Gastrocnemius medialis (tissue), 4 donors: ENCODE measurements at regions of chr6 and their contacts with region 1.

Region 1: GRCh38 chr6:109009236-109009961 is 85.2 kb downstream of the SESN1 start:
- DNase-seq: peak; percentile 87 to 92
- ATAC-seq: peak; percentile 85 to 86
- H3K4me3 ChIP-seq: peak overlapping the region; percentile 60 to 89 (median 78)
- H3K27ac ChIP-seq: peak overlapping the region; percentile 92 to 98 (median 95)
- H3K4me1 ChIP-seq: peaks cover 52 to 61% of the 10 kb centered on the region in 2 donors
- H3K27me3 ChIP-seq: no peaks in the 10 kb centered on the region
- CTCF ChIP-seq: peak; percentile 18 to 74 (median 53)
- POLR2A ChIP-seq: peak; percentile 82 to 97

Region 2: GRCh38 chr6:108541838-108542759 is 467.3 kb before region 1 on chr6:
- in situ Hi-C with region 1: no loop called
- intact Hi-C with region 1: loop called (anchors 5 kb)
- DNase-seq: peak; percentile 76 to 86
- ATAC-seq: peak; percentile 90 to 94
- H3K4me3 ChIP-seq: no peak overlapping the region
- H3K27ac ChIP-seq: peak overlapping the region; percentile 54 to 86 (median 75)
- H3K4me1 ChIP-seq: peaks cover 26 to 29% of the 10 kb centered on the region in 2 donors
- H3K27me3 ChIP-seq: no peaks in the 10 kb centered on the region
- CTCF ChIP-seq: peak; percentile 80 to 95 (median 89)
- POLR2A ChIP-seq: no peak

Region 3: DNA sequence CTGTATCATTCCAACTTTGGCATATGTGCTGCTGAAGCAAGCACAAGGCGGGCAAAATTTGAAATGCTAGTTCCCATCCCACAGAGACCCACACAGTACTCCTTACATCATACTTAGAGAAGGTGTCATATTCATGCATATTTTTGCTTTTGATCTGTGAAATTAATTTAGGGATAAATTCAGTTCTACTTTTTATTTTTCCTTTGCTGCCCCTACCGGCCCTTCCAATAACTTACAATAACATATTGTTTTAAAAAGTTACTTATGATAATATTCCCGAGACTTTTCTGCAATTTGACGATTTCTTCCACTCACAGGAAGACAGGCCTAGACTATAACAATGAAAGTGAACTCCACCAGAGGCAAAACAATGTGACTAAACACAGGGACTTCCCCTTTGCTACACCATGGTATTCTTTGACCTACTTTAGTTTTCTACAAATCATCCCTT is 50.2 kb after region 1 on chr6:
- in situ Hi-C with region 1: loop called in 1 of 4 experiments (anchors 10 kb)
- intact Hi-C with region 1: loop called (anchors 5 kb)
- DNase-seq: no peak
- ATAC-seq: peak; percentile 57 to 67
- H3K4me3 ChIP-seq: no peak overlapping the region
- H3K27ac ChIP-seq: peak overlapping the region; percentile 72 to 78 (median 74)
- H3K4me1 ChIP-seq: peaks cover 83 to 97% of the 10 kb centered on the region in 2 donors
- H3K27me3 ChIP-seq: no peaks in the 10 kb centered on the region
- CTCF ChIP-seq: peak in 2 of 5 experiments; percentile 23 to 35
- POLR2A ChIP-seq: no peak

Region 4: GRCh38 chr6:109082188-109082577 is 72.8 kb after region 1 on chr6:
- in situ Hi-C with region 1: loop called in 1 of 4 experiments (anchors 10 kb)
- intact Hi-C with region 1: no loop called
- DNase-seq: peak; percentile 24 to 63
- ATAC-seq: peak; percentile 66 to 67
- H3K4me3 ChIP-seq: peak overlapping the region; percentile 1 to 39 (median 22)
- H3K27ac ChIP-seq: peak overlapping the region; percentile 93 to 98 (median 96)
- H3K4me1 ChIP-seq: peaks cover 82 to 83% of the 10 kb centered on the region in 2 donors
- H3K27me3 ChIP-seq: no peaks in the 10 kb centered on the region
- CTCF ChIP-seq: peak in 3 of 5 experiments; percentile 50 to 60 (median 53)
- POLR2A ChIP-seq: peak; percentile 42 to 68